Activated B cell treated with CpG ODN at 0.5 μM for 24 hours (primary cell): ENCODE measurements at regions of chr17 and their contacts with region 1.

Region 1: GRCh38 chr17:64145757-64146417 is 15.9 kb upstream of the ERN1 start:
- DNase-seq: peak; percentile 84
- ATAC-seq: peak; percentile 94
- H3K4me3 Mint-ChIP-seq: no peak overlapping the region
- H3K27ac Mint-ChIP-seq: no peak overlapping the region
- H3K4me1 Mint-ChIP-seq: peaks cover 16% of the 10 kb centered on the region
- H3K27me3 Mint-ChIP-seq: no peaks in the 10 kb centered on the region
- CTCF ChIP-seq: no peak

Region 2: DNA sequence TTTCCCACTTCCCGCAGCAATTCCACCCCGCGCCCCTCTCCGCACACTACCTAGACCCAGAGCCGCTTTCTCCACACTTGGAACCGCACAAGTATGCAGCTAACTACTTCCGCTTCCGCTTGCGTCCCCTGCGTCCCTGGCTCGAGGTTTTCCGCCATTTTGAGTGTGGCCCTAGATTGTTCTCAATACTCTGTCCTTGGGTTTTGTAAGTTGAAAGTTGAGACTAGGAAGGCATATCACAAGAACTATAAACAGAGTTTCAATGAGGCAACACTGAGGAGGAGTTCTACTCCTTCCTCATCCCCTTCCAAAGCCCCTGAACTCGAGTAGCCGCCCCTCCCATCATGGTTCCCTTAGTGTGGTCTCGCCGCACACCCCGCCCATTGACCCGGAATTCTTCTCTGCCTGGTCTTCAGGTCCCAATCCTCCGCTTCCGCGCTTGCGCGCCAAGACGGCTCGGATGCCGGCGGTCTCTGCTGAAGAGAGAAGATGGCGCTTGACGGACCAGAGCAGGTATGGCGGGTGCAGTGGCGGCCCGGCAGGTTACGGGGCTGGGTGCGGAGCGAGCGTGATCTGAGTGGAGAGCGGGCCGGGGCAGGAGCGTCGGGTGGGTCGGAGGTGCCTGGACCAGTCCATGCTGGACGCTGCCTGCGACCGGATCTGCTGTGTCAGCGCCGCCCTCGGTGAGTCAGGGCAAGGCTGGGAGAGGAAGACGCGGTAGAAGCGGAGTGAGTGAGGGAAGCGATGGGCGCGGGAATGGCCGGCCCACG is 318.7 kb before region 1 on chr17 and contains the starts of genes FTSJ3 and PSMC5:
- CTCF ChIA-PET with region 1: no interaction called
- POLR2A ChIA-PET with region 1: interaction called, 3 read pairs
- intact Hi-C with region 1: loop called (anchors 1 kb)
- DNase-seq: peak; percentile 90
- ATAC-seq: peak; percentile 95
- H3K4me3 Mint-ChIP-seq: peak within 1 kb of the TSS; percentile 98
- H3K27ac Mint-ChIP-seq: peak within 1 kb of the TSS; percentile 100
- H3K4me1 Mint-ChIP-seq: peaks cover 75% of the 10 kb centered on the region
- H3K27me3 Mint-ChIP-seq: no peaks in the 10 kb centered on the region
- CTCF ChIP-seq: no peak
- total RNA-seq, gene FTSJ3: 82.0 and 85.1 TPM in 2 replicates
- total RNA-seq, gene PSMC5: 157 TPM in 2 replicates

Region 3: GRCh38 chr17:63954402-63955063 is 191.4 kb before region 1 on chr17:
- CTCF ChIA-PET with region 1: no interaction called
- POLR2A ChIA-PET with region 1: interaction called, 10 read pairs
- intact Hi-C with region 1: no loop called
- DNase-seq: peak; percentile 50
- ATAC-seq: peak; percentile 86
- H3K4me3 Mint-ChIP-seq: peak overlapping the region; percentile 77
- H3K27ac Mint-ChIP-seq: peak overlapping the region; percentile 94
- H3K4me1 Mint-ChIP-seq: peaks cover 37% of the 10 kb centered on the region
- H3K27me3 Mint-ChIP-seq: no peaks in the 10 kb centered on the region
- CTCF ChIP-seq: no peak

Region 4: GRCh38 chr17:64063766-64064224 is 82.1 kb before region 1 on chr17:
- CTCF ChIA-PET with region 1: no interaction called
- POLR2A ChIA-PET with region 1: interaction called, 10 read pairs
- intact Hi-C with region 1: no loop called
- DNase-seq: no peak
- ATAC-seq: peak; percentile 58
- H3K4me3 Mint-ChIP-seq: no peak overlapping the region
- H3K27ac Mint-ChIP-seq: no peak overlapping the region
- H3K4me1 Mint-ChIP-seq: peaks cover 14% of the 10 kb centered on the region
- H3K27me3 Mint-ChIP-seq: no peaks in the 10 kb centered on the region
- CTCF ChIP-seq: no peak

Region 5: GRCh38 chr17:64262417-64263260 is 116.8 kb after region 1 on chr17 and contains the start of gene TEX2:
- CTCF ChIA-PET with region 1: interaction called, 3 read pairs
- POLR2A ChIA-PET with region 1: interaction called, 36 read pairs
- intact Hi-C with region 1: loop called (anchors 1 kb)
- DNase-seq: peak; percentile 43
- ATAC-seq: peak; percentile 25
- H3K4me3 Mint-ChIP-seq: peak within 1 kb of the TSS; percentile 88
- H3K27ac Mint-ChIP-seq: peak within 1 kb of the TSS; percentile 80
- H3K4me1 Mint-ChIP-seq: peaks cover 19% of the 10 kb centered on the region
- H3K27me3 Mint-ChIP-seq: peaks cover 10% of the 10 kb centered on the region
- CTCF ChIP-seq: no peak
- total RNA-seq, gene TEX2: 8.1 TPM in 2 replicates

Region 6: DNA sequence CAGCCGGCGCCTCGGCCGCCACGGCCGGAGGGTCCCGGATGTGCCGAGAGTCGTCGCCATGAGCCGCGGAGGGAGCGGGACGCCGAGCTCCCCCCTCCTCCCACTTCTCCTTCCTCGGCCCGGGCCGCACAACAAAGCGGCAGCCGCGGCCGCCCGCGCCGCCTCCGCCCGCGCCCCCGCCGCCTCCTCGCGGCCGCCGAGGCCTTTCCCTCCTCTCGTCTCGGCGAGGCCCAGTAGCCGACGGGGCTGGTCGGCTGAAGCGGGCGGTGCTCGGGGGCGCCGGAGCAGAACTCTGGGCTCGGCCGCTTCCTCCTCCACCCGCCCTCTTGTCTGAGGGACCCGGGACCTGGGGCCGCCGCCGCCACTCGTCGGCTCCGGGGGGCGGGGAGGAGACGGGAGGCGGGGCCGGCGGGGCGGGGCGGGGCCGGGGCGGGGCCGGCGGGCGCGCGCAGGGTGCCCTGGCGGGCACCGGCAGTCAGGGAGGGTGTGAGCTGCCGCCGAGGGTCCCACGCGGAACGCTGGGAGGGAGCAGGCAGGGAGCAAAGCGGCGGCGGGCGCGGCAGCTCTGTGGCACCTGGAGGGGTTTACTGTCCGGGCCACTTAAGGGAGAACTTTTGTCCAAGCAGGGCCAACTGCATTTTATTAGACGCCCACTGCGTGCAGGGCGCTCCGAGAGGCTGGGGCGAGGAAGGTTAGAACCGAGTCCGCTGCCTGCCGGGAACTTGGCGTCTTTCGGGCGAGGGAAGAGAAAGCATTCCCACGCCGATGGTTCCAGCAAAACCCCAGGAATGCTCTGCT is 516.3 kb after region 1 on chr17 and contains the start of gene SMURF2:
- CTCF ChIA-PET with region 1: no interaction called
- POLR2A ChIA-PET with region 1: interaction called, 4 read pairs
- intact Hi-C with region 1: loop called (anchors 5 kb)
- DNase-seq: peak; percentile 83
- ATAC-seq: peak; percentile 85
- H3K4me3 Mint-ChIP-seq: peak within 1 kb of the TSS; percentile 96
- H3K27ac Mint-ChIP-seq: peak within 1 kb of the TSS; percentile 95
- H3K4me1 Mint-ChIP-seq: peaks cover 28% of the 10 kb centered on the region
- H3K27me3 Mint-ChIP-seq: no peaks in the 10 kb centered on the region
- CTCF ChIP-seq: no peak
- total RNA-seq, gene SMURF2: 18.9 and 23.0 TPM in 2 replicates